Dorsolateral prefrontal cortex (tissue), 120 donors: ENCODE measurements at regions of chr2 and their contacts with region 1.

Region 1: DNA sequence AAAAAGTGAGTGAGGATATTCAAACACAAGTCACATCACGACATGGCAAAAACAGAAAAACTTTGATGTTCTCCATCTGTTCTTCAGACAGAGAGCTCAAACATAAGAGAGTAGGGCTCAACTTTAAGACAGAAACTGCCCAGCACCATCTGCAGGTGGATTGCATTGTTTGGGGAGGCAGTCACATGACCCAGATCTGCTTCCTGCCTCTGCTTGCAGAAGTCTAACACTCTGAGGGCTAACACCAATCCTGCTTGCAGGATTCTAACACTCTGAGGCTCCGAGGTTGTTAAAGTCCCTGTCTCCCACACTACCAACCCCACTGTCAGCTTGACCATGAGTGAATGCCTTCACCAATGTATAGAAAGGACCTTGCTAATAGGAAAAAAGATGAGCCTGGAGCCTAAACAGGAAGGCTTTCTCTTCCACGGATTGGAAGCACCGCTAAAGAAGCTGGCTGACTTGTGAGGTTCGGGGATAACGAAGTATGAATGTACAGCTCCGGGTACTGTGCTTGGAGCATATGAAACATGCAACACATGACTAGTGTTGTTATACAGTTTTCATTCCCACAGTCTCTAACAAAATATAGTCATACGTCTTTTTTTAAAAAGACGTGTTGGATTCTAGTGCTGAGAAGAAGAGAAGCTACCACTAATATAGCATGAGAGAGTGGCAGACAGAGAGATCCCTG is 176.6 kb upstream of the CREB1 start:
- DNase-seq: peak in 9 of 10 donors; percentile 29 to 66 (median 50)
- H3K4me3 ChIP-seq: peak overlapping the region in 35 of 59 donors; percentile 1 to 48 (median 21)
- H3K27ac ChIP-seq: peak overlapping the region in 42 of 59 donors; percentile 3 to 79 (median 50)
- H3K27me3 ChIP-seq: no peaks in the 10 kb centered on the region
- CTCF ChIP-seq: peak in 14 of 56 donors; percentile 10 to 33 (median 20)

Region 2: DNA sequence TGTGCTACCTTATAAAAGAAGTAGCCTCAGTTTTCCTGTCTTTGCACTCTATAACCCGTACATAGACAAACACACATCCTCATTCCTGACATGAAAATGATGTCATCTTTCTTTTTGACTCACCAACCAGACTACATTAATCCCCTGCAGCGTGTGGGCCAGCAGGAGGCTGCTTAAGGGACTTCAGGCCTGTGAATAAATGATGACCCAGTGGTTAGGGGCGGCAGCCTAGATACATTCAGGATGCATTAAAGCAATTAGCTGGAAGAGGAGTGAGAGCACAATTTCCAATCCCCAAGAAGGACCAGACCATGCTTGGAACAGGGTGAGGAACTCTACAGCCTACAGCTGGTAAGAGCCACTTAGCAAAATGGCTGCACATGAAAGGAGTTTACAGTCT is 130.1 kb before region 1 on chr2:
- intact Hi-C with region 1: loop called in 1 of 2 experiments (anchors 5 kb)
- DNase-seq: no peak
- H3K4me3 ChIP-seq: no peak overlapping the region
- H3K27ac ChIP-seq: no peak overlapping the region
- H3K27me3 ChIP-seq: no peaks in the 10 kb centered on the region
- CTCF ChIP-seq: no peak

Region 3: DNA sequence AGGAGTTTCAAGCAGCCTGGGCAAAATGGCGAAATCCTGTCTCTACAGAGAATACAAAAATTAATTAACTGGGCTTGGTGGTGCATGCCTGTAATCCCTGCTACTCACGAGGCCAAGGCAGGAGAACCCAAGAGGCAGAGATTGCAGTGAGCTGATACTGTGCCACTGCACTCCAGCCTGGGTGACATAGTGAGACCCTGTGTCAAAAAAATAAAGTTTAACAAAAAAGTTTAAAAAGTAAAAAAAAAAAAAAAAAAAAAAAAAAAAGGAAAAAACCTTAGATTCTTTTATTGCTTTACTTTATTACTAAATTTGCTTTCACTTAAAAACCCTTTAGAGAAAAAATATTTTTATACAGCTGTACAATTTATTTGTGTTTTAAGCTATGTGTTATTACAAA is 187.3 kb after region 1 on chr2:
- intact Hi-C with region 1: no loop called
- DNase-seq: no peak
- H3K4me3 ChIP-seq: no peak overlapping the region
- H3K27ac ChIP-seq: no peak overlapping the region
- H3K27me3 ChIP-seq: no peaks in the 10 kb centered on the region
- CTCF ChIP-seq: no peak